Posterior vena cava (tissue), 2 donors: ENCODE measurements at regions of chr12 and their contacts with region 1.

Region 1: GRCh38 chr12:57261428-57261865 is 10.5 kb upstream of the STAC3 start:
- DNase-seq: no peak

Region 2: DNA sequence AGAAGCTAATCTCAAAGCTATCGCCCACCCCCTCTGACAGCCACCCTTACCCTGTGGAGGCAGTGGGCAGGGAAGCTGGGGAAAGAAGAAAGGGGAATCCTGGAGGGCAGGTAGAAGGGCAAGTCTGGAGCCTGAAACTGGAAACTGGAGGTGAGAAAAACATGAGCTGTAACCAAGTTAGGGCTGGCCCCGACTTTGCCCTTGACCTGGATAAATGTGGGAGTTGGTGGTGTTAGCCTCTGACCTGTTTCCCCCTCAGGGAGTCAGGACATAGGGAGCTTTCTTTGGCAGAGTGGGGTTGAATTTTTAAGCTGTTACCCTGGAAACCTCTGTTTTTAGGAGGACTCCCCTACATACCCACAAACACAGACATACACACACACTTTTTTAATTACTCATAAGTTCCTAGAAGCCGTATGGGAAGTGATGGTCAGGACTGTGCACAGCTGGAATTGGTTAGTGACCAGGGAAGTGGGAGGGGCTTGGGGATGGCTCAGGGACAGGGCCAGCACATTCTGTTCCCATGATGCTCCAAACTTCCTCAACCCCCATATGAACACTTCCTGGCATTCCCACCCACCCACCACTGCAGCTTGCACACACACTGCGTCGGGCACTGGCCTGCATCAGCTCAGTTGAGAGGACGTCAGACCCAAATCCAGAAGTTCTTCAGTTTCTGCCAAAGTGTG is 1413.7 kb before region 1 on chr12:
- intact Hi-C with region 1: loop called in 1 of 2 experiments (anchors 5 kb)
- DNase-seq: peak; percentile 97

Region 3: GRCh38 chr12:57452937-57453509 is 191.6 kb after region 1 on chr12:
- intact Hi-C with region 1: loop called in 1 of 2 experiments (anchors 5 kb)
- DNase-seq: peak; percentile 93